Activated T-helper 2 cell treated with anti-CD3 and anti-CD28 coated beads, Interferon-gamma antibody, Interleukin-2, Interleukin-4, amounts not matched to agents 10 μg/mL and 5 μg/mL and 100 μg/mL, durations not matched to agents 14 hours and 24 hours and 36 hours (primary cell): ENCODE measurements at regions of chr15 and their contacts with region 1.

Region 1: DNA sequence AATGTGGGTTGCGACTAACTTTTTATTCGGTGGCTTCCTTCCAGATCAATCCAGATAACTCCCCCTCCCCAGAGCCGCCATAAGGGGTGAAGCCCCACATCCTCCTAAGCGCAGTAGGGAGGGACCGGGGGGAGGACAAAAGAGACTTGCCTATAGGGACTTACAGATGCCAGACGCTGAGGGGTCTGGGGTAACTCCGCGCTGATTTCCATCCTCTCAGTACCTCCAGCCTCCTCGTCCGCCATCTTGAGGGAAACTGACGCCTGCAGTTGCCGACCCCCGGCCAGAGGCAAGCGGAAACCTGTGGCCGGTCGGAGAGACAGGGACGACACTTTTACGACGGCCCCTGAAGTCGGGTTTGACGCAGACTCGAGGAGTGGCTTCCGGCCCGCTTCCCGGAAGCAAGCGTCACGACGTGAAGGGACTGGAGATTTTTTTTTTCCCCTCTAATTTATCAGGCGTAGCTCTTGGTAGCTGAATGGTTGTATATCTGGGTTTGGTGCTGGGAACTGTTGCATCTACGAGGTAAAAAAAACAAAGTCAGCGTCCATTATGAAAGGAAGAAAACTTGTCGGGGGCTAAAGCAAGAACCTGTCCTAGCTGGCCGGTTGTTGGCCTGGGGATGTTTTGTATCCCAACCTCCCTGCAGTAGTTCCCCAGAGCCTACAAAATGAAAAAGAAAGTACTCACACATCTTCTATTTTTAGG is at the start of gene UBR1:
- DNase-seq: peak; percentile 87
- H3K4me3 Mint-ChIP-seq: peak within 1 kb of the TSS; percentile 98
- H3K27ac Mint-ChIP-seq: peak within 1 kb of the TSS; percentile 96
- H3K4me1 Mint-ChIP-seq: peaks cover 44% of the 10 kb centered on the region
- H3K27me3 Mint-ChIP-seq: no peaks in the 10 kb centered on the region
- total RNA-seq, gene UBR1: 36.0 and 36.7 TPM in 2 replicates

Region 2: GRCh38 chr15:43121863-43122262 is 15.9 kb after region 1 on chr15:
- intact Hi-C with region 1: loop called (anchors 2 kb)
- DNase-seq: no peak
- H3K4me3 Mint-ChIP-seq: peak overlapping the region; percentile 10
- H3K27ac Mint-ChIP-seq: no peak overlapping the region
- H3K4me1 Mint-ChIP-seq: peaks cover 21% of the 10 kb centered on the region
- H3K27me3 Mint-ChIP-seq: peaks cover 25% of the 10 kb centered on the region

Region 3: DNA sequence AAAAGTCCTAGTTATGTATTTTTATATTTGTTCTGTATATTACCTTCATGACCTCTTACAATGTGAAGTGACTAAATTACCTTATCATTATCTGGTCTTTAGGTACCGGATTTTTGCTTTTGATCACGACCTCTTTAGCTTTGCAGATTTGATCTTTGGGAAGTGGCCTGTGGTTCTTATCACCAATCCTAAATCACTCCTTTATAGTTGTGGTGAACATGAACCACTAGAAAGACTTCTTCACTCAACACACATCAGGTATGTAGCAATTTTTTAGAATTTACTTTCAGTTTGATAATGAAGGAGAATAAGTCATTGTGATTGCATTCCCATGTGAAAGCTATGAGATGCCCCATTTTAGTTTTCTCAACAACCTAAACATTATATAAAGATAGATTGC is 45.8 kb after region 1 on chr15:
- intact Hi-C with region 1: loop called (anchors 1 kb)
- DNase-seq: peak; percentile 26
- H3K4me3 Mint-ChIP-seq: no peak overlapping the region
- H3K27ac Mint-ChIP-seq: no peak overlapping the region
- H3K4me1 Mint-ChIP-seq: peaks cover 18% of the 10 kb centered on the region
- H3K27me3 Mint-ChIP-seq: no peaks in the 10 kb centered on the region